ENCODE measurements at regions of chr20 and their contacts with region 1.

Region 1: GRCh38 chr20:62136283-62137091 is 6.7 kb downstream of the PSMA7 start:
- DNase-seq: peak; percentile 78 to 91 (median 85)
- H3K4me3 ChIP-seq: no peak overlapping the region
- H3K27ac ChIP-seq: no peak overlapping the region
- H3K4me1 ChIP-seq: peaks cover 2 to 40% (median 25%) of the 10 kb centered on the region in 4 experiments
- H3K27me3 ChIP-seq: no peaks in the 10 kb centered on the region

Region 2: DNA sequence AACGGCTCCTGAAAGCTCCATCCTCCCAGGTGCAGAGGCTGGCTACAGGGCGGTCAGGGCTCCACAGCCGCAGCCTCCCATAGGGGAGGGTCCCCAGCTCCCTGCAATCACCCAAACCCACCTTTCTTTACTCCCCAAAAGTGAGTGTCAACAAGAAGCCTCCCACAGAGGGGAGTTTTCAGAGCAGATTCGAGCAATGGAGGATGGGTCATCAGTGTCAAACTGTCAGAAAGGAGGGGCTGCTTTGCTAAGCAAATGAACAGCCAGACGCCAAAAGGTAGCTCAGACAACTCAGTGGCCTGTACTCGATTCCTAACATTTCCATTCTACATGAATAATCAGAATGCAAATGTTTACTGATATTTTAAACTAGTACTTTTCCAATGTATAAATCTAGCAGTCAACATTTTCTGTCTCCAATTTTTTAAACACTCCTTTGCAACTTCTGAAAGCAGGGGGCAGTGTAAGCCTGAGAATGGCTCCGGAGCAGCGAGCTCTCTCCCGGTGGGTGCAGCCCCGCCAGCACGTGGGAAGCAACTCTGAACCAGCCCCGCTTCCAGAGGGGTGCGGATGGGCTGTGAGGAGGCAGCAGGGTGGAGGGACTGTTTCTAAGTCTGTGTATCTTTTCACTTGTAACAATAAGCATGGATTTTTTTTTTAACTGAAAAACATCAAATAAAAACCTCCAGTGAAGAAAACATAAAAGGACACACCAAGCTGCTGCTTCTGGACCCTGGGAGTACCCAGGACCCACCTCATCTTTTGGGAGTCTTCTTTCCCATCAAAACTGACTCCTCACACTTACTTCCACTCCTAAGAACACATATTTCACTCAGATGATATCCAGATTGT is 125.7 kb before region 1 on chr20:
- CTCF ChIA-PET with region 1: interaction called, 39 read pairs
- POLR2A ChIA-PET with region 1: interaction called, 3 read pairs
- DNase-seq: peak; percentile 61 to 74 (median 69)
- H3K4me3 ChIP-seq: no peak overlapping the region
- H3K27ac ChIP-seq: no peak overlapping the region
- H3K4me1 ChIP-seq: peaks cover 0 to 5% (median under 1%) of the 10 kb centered on the region in 4 experiments
- H3K27me3 ChIP-seq: no peaks in the 10 kb centered on the region

Region 3: DNA sequence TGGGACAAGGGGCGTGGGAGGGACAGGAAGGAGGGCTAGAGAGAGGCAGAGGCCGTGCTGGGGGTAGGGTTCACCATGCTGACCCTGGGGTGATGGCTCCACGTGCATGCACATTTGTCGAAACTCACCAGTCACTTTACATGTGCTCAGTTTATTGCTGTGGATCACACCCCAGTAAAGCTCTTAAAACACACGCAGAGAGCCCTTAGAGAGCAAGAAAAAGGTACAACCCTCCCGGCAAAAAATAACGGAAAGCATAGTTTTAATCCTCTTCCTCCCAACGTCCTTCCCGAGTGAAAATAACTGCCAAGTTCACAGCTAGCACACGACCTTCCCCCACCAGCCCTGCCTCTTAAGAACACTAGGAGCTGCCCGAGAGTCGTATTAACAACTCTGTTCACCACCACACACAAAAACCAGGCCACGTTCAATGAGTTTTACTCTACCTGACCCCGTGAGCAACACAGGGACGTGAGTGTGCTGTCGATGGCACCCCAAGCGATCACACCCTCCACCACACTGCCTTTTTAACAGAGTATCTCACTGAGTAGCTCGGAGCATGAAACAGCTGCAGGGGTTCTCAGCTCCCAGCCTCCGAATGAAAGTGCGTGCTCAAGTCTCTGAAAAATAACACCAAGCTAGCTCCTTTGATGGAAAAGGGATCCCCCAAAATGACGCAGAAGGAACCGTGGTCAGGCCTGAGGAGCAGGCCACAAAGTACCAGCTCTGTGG is 110.5 kb before region 1 on chr20:
- CTCF ChIA-PET with region 1: interaction called, 113 read pairs
- POLR2A ChIA-PET with region 1: no interaction called
- DNase-seq: peak; percentile 68 to 84 (median 82)
- H3K4me3 ChIP-seq: peak overlapping the region in 4 of 7 experiments; percentile 15 to 57 (median 26)
- H3K27ac ChIP-seq: peak overlapping the region; percentile 34 to 56
- H3K4me1 ChIP-seq: peaks cover 0 to 35% (median 25%) of the 10 kb centered on the region in 4 experiments
- H3K27me3 ChIP-seq: no peaks in the 10 kb centered on the region

Region 4: GRCh38 chr20:62065669-62066338 is 70.7 kb before region 1 on chr20 and contains the start of gene TAF4:
- CTCF ChIA-PET with region 1: interaction called, 22 read pairs
- POLR2A ChIA-PET with region 1: interaction called, 5 read pairs
- DNase-seq: peak; percentile 69 to 85 (median 81)
- H3K4me3 ChIP-seq: peak within 1 kb of the TSS; percentile 54 to 92 (median 79)
- H3K27ac ChIP-seq: peak within 1 kb of the TSS in 1 of 2 experiments; percentile 73
- H3K4me1 ChIP-seq: peaks cover 3 to 38% (median 33%) of the 10 kb centered on the region in 4 experiments
- H3K27me3 ChIP-seq: no peaks in the 10 kb centered on the region

Region 5: GRCh38 chr20:62121776-62122631 is 14.5 kb before region 1 on chr20 and contains the start of gene LSM14B:
- CTCF ChIA-PET with region 1: interaction called, 55 read pairs
- POLR2A ChIA-PET with region 1: interaction called, 5 read pairs
- DNase-seq: peak; percentile 97 to 98 (median 98)
- H3K4me3 ChIP-seq: peak within 1 kb of the TSS; percentile 68 to 88 (median 77)
- H3K27ac ChIP-seq: peak within 1 kb of the TSS; percentile 40 to 79
- H3K4me1 ChIP-seq: peaks cover 6 to 57% (median 33%) of the 10 kb centered on the region in 4 experiments
- H3K27me3 ChIP-seq: no peaks in the 10 kb centered on the region

Region 6: DNA sequence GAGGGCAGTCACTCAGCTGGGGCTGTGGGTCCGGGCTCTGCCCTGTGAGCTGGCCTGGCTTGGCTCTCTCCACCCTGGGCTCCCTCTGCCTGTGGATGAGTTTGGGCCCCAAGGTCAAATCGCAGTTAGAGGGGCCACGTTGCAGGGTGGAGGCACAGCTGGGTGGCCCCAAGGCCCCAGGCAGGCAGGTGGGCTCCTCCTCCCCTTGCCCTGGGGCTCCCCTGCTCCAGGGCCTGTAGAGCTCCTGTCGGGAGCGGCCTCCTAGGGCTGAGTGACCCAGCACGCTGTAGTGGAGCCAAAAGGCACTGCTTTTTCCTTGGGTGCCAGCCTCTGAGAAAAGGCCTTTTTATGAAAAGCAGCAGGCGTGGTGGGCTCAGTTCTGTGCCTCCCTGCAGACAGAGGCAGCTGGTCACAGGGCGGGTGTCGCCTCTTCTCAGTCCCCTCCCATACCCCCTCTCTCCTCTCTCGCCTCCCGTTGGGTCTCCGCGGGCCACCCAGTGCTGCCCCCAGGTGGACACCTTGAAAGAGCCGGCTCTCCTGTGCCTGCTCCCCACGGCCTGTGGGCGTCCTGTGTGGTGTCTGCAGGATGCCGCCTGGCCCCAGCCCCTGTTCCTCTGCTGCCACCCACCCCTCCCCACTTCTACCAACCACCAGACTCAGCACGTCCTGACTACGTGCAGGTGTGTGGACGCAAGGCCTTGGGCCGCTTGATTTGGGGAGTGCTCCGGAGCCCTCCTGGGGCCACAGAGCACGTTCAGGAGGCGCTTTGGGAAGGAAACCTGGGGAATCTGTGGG is 20.3 kb after region 1 on chr20:
- CTCF ChIA-PET with region 1: interaction called, 11 read pairs
- POLR2A ChIA-PET with region 1: no interaction called
- DNase-seq: peak; percentile 75 to 89 (median 89)
- H3K4me3 ChIP-seq: no peak overlapping the region
- H3K27ac ChIP-seq: no peak overlapping the region
- H3K4me1 ChIP-seq: peaks cover 0 to 6% (median 2%) of the 10 kb centered on the region in 4 experiments
- H3K27me3 ChIP-seq: no peaks in the 10 kb centered on the region

Region 7: DNA sequence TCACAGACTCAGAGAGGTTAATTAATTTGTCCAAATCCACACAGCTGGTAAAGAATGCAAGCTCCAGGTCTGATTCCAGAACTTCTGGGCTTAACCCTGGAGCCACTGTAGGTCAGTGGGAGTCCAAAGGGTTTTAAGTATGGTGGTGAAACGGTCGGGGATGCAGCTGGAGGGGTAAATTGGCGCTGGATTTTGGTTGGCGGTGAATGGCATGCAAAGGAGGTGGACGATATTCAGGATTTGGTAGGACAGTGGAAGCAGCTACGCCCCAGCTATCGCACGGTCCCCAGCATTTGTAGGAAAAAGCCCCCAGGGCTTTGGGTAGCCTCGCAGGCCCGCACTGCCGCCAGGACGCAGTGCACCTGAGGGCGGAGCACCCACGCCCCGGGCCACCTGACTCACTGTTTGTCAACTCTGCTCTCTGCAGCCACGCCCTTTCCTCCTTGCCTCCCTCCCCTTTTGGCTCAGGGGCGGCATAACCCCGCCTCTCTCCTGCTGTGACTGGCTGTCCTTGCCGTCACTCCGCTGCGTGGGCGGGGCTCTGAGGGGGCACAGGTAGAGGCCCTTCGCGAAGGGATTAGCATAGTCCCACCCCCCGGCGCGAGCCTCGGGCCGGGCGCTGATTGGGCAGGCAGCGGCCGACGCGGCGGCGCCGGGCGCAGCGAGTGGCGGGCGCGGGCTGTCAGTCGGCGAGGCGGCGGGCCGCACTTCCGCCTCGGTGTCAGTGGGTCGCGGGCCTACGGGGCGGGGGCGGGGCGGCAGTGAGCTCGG is 101.5 kb after region 1 on chr20 and contains the start of gene OSBPL2:
- CTCF ChIA-PET with region 1: no interaction called
- POLR2A ChIA-PET with region 1: no interaction called
- DNase-seq: peak; percentile 98 to 99 (median 99)
- H3K4me3 ChIP-seq: peak within 1 kb of the TSS; percentile 44 to 86 (median 73)
- H3K27ac ChIP-seq: peak within 1 kb of the TSS; percentile 40 to 80
- H3K4me1 ChIP-seq: peaks cover 0 to 20% (median 16%) of the 10 kb centered on the region in 4 experiments
- H3K27me3 ChIP-seq: peaks cover 0 to 3% (median 0%) of the 10 kb centered on the region in 5 experiments

Region 8: GRCh38 chr20:62301773-62302340 is 165.4 kb after region 1 on chr20:
- CTCF ChIA-PET with region 1: no interaction called
- POLR2A ChIA-PET with region 1: no interaction called
- DNase-seq: peak; percentile 94 to 98 (median 97)
- H3K4me3 ChIP-seq: peak overlapping the region; percentile 60 to 90 (median 76)
- H3K27ac ChIP-seq: peak overlapping the region; percentile 25 to 86
- H3K4me1 ChIP-seq: peaks cover 5 to 25% (median 22%) of the 10 kb centered on the region in 4 experiments
- H3K27me3 ChIP-seq: no peaks in the 10 kb centered on the region

Region 9: DNA sequence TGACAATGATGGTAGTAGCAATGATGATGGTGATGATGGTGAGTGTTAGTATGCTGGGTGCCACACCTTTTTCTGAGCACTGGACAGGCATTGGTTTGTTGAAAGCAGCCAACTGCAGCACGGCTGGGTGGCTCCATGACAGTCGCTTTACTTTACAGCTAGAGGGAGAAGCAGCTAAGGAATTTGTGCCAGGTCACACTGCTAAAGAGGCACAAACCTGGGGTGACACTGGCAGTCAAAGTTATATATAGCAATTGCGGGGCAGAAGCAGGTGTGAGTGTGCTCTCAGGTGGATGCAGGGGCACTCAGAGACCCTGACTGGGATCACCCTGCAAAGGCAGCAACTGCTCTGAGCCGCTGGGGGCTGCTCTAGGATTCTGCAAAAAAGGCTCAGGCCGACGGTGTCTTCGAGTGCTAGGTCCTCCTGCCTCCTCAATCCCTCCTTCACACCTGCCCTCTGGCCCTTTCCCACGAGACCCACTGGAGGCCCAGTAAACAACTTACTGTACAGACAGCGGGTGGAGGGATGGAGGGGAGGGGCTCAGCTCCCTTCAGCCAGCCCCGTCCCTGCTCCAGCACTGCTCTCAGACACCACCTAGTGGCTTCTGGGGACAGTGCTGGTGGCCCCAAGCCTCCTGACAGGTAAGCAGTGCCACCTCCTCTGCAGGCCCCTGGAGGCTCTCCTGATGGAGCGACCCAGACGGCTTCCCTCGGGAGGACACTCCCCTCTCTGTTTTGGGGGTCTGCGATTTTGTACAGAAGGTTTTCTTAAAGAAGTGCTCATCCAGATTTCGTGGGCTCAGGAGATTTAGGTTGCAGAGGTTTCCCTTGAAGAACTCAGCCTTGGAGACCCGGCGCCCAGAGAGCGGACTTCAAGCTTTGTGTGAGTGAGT is 246.1 kb after region 1 on chr20:
- CTCF ChIA-PET with region 1: no interaction called
- POLR2A ChIA-PET with region 1: no interaction called
- DNase-seq: peak; percentile 78 to 86 (median 82)
- H3K4me3 ChIP-seq: no peak overlapping the region
- H3K27ac ChIP-seq: no peak overlapping the region
- H3K4me1 ChIP-seq: peaks cover 0 to 15% (median 13%) of the 10 kb centered on the region in 4 experiments
- H3K27me3 ChIP-seq: no peaks in the 10 kb centered on the region

Measured in common myeloid progenitor, CD34-positive (primary cell).